Spleen (tissue), 13 donors: ENCODE measurements at regions of chr4 and their contacts with region 1.

Region 1: DNA sequence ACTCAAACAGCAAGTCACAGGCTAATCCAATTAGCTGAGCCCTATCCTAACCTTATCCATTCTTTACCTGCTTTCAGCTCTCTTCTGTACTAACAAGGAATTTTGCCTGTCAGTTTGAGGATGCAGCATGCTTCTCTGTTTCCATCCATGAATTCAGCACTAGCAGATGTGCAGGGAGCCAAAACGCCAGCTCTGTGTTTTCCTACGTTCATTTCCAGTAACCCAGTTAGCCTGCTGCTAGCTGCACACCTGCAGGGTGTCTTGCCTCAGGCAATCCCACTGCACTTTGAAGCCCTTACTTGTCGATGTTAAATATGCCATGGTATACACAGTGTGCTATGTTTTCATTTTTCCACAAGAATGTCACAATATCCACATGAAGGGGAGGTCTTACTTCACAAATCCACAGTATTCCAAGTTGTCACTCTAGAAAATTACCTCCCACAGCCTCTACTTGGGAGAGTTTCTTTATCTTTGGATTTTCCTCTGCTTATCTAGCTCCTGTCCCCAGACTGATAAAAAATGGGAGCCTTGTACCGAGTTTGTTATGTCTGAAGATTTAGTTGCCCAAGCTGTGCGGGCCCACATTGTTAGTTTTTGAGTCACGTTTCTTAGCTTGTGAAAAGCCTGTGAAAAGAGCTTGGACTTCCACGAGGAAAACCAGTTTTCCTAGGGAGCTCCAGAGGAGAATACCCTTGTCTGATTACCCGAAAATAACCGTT is 127.6 kb upstream of the HHIP start:
- DNase-seq: no peak
- H3K4me3 ChIP-seq: no peak overlapping the region
- H3K27ac ChIP-seq: no peak overlapping the region
- H3K4me1 ChIP-seq: no peaks in the 10 kb centered on the region
- H3K27me3 ChIP-seq: peaks cover 0 to 5% (median 0%) of the 10 kb centered on the region in 7 donors
- CTCF ChIP-seq: no peak
- POLR2A ChIP-seq: no peak

Region 2: GRCh38 chr4:144399927-144400326 is 118.4 kb before region 1 on chr4:
- intact Hi-C with region 1: loop called (anchors 5 kb)
- DNase-seq: no peak
- H3K4me3 ChIP-seq: no peak overlapping the region
- H3K27ac ChIP-seq: no peak overlapping the region
- H3K4me1 ChIP-seq: no peaks in the 10 kb centered on the region
- H3K27me3 ChIP-seq: no peaks in the 10 kb centered on the region
- CTCF ChIP-seq: no peak
- POLR2A ChIP-seq: no peak